ENCODE measurements at regions of chr3 and their contacts with region 1.

Region 1: GRCh38 chr3:70108072-70108471 is 108.5 kb downstream of the SAMMSON start:
- DNase-seq: peak; percentile 10
- H3K4me3 ChIP-seq: no peak overlapping the region
- H3K27ac ChIP-seq: no peak overlapping the region
- H3K4me1 ChIP-seq: no peaks in the 10 kb centered on the region
- H3K27me3 ChIP-seq: no peaks in the 10 kb centered on the region
- CTCF ChIP-seq: peak; percentile 50

Region 2: GRCh38 chr3:69901802-69902201 is 206.3 kb before region 1 on chr3:
- CTCF ChIA-PET with region 1: no interaction called
- POLR2A ChIA-PET with region 1: no interaction called
- intact Hi-C with region 1: no loop called
- DNase-seq: no peak
- H3K4me3 ChIP-seq: no peak overlapping the region
- H3K27ac ChIP-seq: no peak overlapping the region
- H3K4me1 ChIP-seq: no peaks in the 10 kb centered on the region
- H3K27me3 ChIP-seq: no peaks in the 10 kb centered on the region
- CTCF ChIP-seq: no peak

Region 3: GRCh38 chr3:70075101-70075500 is 33.0 kb before region 1 on chr3:
- CTCF ChIA-PET with region 1: no interaction called
- POLR2A ChIA-PET with region 1: interaction called, 10 read pairs
- intact Hi-C with region 1: no loop called
- DNase-seq: no peak
- H3K4me3 ChIP-seq: no peak overlapping the region
- H3K27ac ChIP-seq: no peak overlapping the region
- H3K4me1 ChIP-seq: no peaks in the 10 kb centered on the region
- H3K27me3 ChIP-seq: no peaks in the 10 kb centered on the region
- CTCF ChIP-seq: no peak

Measured in A673 (cell line).